Esophagus muscularis mucosa (tissue), 4 donors: ENCODE measurements at regions of chr1 and their contacts with region 1.

Region 1: DNA sequence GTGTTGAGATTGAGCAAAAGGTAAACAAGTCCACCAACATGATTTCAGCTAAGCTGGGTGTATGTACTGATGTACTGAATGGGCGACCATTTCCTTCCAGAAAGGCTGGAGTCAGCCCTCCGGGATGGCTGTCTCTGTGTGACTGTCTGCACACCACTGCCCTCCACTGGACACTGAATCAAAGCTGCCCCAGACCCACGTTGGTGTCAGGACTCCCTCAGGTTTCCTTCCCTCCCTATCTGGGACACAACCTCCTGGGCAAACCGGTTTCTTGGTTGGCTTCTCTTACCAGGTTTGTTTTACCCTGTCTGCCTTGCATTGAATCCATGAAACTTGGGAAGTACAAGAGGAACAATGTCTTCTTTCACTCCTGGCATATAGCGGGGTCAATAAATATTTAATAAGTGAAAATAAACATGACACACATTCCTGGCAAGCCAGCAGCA is 5.3 kb upstream of the SRP9 start:
- DNase-seq: no peak
- H3K4me3 ChIP-seq: no peak overlapping the region
- H3K27ac ChIP-seq: peak overlapping the region; percentile 69 to 74 (median 72)
- H3K4me1 ChIP-seq: peaks cover 46 to 56% (median 51%) of the 10 kb centered on the region in 4 donors
- H3K27me3 ChIP-seq: no peaks in the 10 kb centered on the region
- CTCF ChIP-seq: peak; percentile 85 to 92 (median 89)
- EP300 ChIP-seq: no peak
- POLR2A ChIP-seq: no peak

Region 2: GRCh38 chr1:225474986-225475820 is 297.1 kb before region 1 on chr1:
- intact Hi-C with region 1: loop called (anchors 2 kb)
- DNase-seq: peak; percentile 92
- H3K4me3 ChIP-seq: peak overlapping the region; percentile 15 to 43 (median 19)
- H3K27ac ChIP-seq: no peak overlapping the region
- H3K4me1 ChIP-seq: peaks cover 4 to 34% (median 26%) of the 10 kb centered on the region in 4 donors
- H3K27me3 ChIP-seq: no peaks in the 10 kb centered on the region
- CTCF ChIP-seq: peak in 2 of 3 experiments; percentile 100
- EP300 ChIP-seq: no peak
- POLR2A ChIP-seq: no peak

Region 3: DNA sequence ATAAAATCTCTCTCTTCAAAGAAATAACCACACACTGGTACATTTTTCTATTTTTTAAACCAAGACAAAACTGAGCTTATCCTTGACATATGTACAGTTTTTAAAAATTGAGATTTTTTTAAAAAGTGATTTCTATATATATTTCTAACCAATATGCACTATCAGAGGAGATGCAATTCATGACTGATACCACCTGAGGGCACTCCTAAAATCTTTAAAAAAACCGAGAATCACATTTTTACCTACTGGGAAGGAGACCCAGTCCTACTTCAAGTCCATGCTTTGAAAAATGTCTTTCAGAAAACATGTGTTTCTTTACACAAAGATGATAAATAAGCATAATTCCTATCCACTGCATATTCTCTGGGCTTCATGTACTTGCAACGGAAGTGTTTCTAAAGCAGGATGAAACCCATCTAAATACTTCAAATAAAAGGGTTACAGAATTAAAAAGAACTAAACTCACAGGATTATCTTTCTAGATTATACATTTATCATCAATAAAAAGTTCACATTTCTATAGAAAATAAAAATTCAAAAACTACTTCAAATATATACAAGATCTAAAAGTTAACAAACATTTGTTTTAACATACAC is 218.0 kb before region 1 on chr1:
- intact Hi-C with region 1: loop called (anchors 5 kb)
- DNase-seq: no peak
- H3K4me3 ChIP-seq: no peak overlapping the region
- H3K27ac ChIP-seq: no peak overlapping the region
- H3K4me1 ChIP-seq: peaks cover 8 to 21% (median 14%) of the 10 kb centered on the region in 4 donors
- H3K27me3 ChIP-seq: no peaks in the 10 kb centered on the region
- CTCF ChIP-seq: peak; percentile 56 to 67 (median 62)
- EP300 ChIP-seq: no peak
- POLR2A ChIP-seq: no peak

Region 4: GRCh38 chr1:225652729-225653462 is 119.5 kb before region 1 on chr1 and contains the start of gene ENAH:
- intact Hi-C with region 1: loop called (anchors 5 kb)
- DNase-seq: no peak
- H3K4me3 ChIP-seq: peak within 1 kb of the TSS; percentile 93 to 98 (median 96)
- H3K27ac ChIP-seq: peak within 1 kb of the TSS; percentile 96 to 100 (median 98)
- H3K4me1 ChIP-seq: peaks cover 28 to 58% (median 55%) of the 10 kb centered on the region in 4 donors
- H3K27me3 ChIP-seq: peaks cover 0 to 8% (median 0%) of the 10 kb centered on the region in 4 donors
- CTCF ChIP-seq: no peak
- EP300 ChIP-seq: no peak
- POLR2A ChIP-seq: peak; percentile 38
- total RNA-seq, gene ENAH: 198 to 229 (median 201) TPM

Region 5: DNA sequence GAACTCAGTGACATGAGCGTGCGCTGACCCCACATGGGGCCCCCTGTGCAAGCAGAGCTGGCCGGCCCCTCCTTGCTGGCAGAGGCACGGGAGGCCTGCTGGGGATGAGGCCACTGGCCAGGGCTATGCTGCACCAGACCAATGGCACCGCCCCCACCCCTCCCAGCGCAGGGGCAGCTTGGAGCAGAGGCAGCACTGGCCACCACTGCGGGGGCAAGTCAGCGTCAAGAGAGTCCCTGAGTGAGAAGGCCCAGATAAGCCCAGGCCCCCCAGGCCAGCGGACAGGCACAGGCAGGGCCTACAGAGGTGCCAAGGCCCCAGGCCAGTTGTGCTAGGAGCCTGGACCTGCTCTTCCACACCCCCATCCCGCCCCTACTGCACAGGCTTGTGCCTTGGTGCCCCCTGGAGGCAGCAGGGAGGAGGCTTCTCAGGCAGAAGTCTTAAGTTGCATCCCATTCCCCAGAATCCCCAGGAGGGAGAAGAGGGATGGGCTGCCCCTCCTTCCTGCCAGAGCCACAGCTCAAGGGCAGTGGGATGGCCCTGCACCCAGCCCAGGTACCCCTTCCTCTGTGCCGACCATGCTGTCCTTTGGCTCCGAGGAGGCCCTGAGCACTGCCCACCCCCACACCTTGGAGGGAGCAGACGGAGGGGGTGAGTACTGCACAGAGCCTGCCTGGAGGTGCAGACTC is 73.4 kb after region 1 on chr1:
- intact Hi-C with region 1: loop called (anchors 2 kb)
- DNase-seq: no peak
- H3K4me3 ChIP-seq: no peak overlapping the region
- H3K27ac ChIP-seq: peak overlapping the region; percentile 37 to 59 (median 55)
- H3K4me1 ChIP-seq: peaks cover 10 to 34% (median 15%) of the 10 kb centered on the region in 4 donors
- H3K27me3 ChIP-seq: no peaks in the 10 kb centered on the region
- CTCF ChIP-seq: peak; percentile 80 to 88 (median 85)
- EP300 ChIP-seq: no peak
- POLR2A ChIP-seq: no peak

Region 6: DNA sequence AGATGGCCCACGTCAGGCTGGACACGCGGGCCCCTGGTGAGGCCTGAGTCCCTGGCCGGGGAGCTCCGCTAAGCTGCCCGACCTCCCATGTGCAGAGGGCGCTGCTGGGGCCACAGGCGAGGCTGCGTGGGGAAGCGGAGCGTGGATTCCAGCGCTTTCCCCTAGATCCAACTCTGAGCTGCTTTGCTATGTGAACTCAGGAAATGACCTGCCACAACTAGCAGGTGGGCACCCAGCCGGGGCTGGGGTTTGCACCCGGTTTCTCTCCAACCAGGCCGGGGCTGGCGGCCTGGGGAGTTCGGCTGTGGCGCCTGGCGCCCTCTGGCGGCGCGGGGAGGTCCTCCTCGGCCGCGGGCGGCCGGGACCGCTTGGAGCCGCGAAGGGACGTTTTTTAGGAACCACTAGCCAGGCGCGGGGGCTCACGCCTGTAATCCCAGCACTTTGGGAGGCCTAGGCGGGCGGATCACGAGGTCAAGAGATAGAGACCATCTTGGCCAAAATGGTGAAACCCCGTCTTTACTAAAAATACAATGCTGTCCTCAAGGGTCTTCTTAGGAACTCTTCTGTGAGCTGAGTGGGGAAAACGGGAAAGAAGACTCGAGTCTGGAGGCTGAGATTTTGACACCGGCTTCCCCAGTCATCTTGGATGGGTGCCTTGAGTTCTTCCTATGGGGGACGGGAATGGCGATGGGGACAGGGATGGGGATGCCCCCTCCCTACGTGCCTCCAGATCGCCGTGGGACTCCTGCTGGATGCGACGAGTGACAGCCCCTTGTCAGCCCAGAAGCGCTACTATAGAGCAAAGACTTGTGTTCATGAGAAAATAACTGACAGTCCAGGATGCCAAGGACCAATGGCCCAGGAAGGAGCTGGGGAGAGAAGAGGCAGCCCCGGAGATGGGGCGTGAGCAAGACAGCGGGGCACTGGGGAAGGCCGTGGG is 139.1 kb after region 1 on chr1:
- intact Hi-C with region 1: loop called (anchors 5 kb)
- DNase-seq: no peak
- H3K4me3 ChIP-seq: peak overlapping the region; percentile 5 to 21 (median 11)
- H3K27ac ChIP-seq: no peak overlapping the region
- H3K4me1 ChIP-seq: peaks cover 0 to 13% (median 10%) of the 10 kb centered on the region in 4 donors
- H3K27me3 ChIP-seq: no peaks in the 10 kb centered on the region
- CTCF ChIP-seq: peak; percentile 91 to 98 (median 91)
- EP300 ChIP-seq: no peak
- POLR2A ChIP-seq: no peak